Heart left ventricle (tissue), 16 donors: ENCODE measurements at regions of chr17 and their contacts with region 1.

Region 1: GRCh38 chr17:37160944-37161343 is 212.2 kb downstream of the AATF start:
- DNase-seq: no peak
- ATAC-seq: no peak
- H3K4me3 ChIP-seq: no peak overlapping the region
- H3K27ac ChIP-seq: no peak overlapping the region
- H3K4me1 ChIP-seq: no peaks in the 10 kb centered on the region
- H3K27me3 ChIP-seq: no peaks in the 10 kb centered on the region
- CTCF ChIP-seq: no peak
- POLR2A ChIP-seq: no peak

Region 2: GRCh38 chr17:35953720-35954119 is 1207.2 kb before region 1 on chr17:
- intact Hi-C with region 1: loop called in 1 of 10 experiments (anchors 10 kb)
- DNase-seq: no peak
- ATAC-seq: no peak
- H3K4me3 ChIP-seq: no peak overlapping the region
- H3K27ac ChIP-seq: no peak overlapping the region
- H3K4me1 ChIP-seq: no peaks in the 10 kb centered on the region
- H3K27me3 ChIP-seq: peaks cover 0 to 16% (median 0%) of the 10 kb centered on the region in 9 donors
- CTCF ChIP-seq: no peak
- POLR2A ChIP-seq: no peak